GM12878 (cell line): ENCODE measurements at regions of chr10 and their contacts with region 1.

Region 1: GRCh38 chr10:34156781-34157425 is 658.2 kb downstream of the PARD3 start:
- DNase-seq: no peak
- ATAC-seq: no peak
- H3K4me3 ChIP-seq: no peak overlapping the region
- H3K27ac ChIP-seq: no peak overlapping the region
- H3K4me1 ChIP-seq: no peaks in the 10 kb centered on the region
- H3K27me3 ChIP-seq: no peaks in the 10 kb centered on the region
- CTCF ChIP-seq: no peak
- EP300 ChIP-seq: no peak
- POLR2A ChIP-seq: no peak
- RAD21 ChIP-seq: no peak

Region 2: DNA sequence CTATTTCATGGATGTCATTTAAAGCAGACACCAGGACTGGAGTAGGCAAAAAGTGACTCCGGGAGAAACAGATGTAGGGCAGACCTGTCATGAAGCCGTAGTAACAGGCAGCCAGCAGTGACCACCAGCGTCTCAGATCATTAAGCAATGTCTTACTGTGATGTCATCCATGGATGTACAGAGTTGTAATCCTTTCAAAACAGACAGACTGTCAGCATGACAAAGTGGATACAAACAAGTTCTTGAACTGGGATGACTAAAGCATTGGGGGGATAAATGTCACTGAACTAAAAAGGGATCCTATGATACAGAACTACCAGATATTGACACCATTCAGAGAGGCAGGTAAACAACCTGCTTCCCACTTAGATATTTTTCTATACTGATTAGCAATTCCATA is 17.3 kb before region 1 on chr10:
- CTCF ChIA-PET with region 1: no interaction called
- POLR2A ChIA-PET with region 1: no interaction called
- RAD21 ChIA-PET with region 1: interaction called, 14 read pairs
- SMC1A ChIA-PET with region 1: interaction called, 14 read pairs
- in situ Hi-C with region 1: no loop called
- intact Hi-C with region 1: no loop called
- DNase-seq: no peak
- ATAC-seq: peak; percentile 34
- H3K4me3 ChIP-seq: no peak overlapping the region
- H3K27ac ChIP-seq: no peak overlapping the region
- H3K4me1 ChIP-seq: no peaks in the 10 kb centered on the region
- H3K27me3 ChIP-seq: no peaks in the 10 kb centered on the region
- CTCF ChIP-seq: no peak
- EP300 ChIP-seq: no peak
- POLR2A ChIP-seq: no peak
- RAD21 ChIP-seq: no peak

Region 3: GRCh38 chr10:34200355-34200901 is 43.5 kb after region 1 on chr10:
- CTCF ChIA-PET with region 1: no interaction called
- POLR2A ChIA-PET with region 1: no interaction called
- RAD21 ChIA-PET with region 1: no interaction called
- SMC1A ChIA-PET with region 1: no interaction called
- in situ Hi-C with region 1: no loop called
- intact Hi-C with region 1: loop called (anchors 5 kb)
- DNase-seq: no peak
- ATAC-seq: peak; percentile 44; the same call in 2 of the 3 replicates
- H3K4me3 ChIP-seq: no peak overlapping the region
- H3K27ac ChIP-seq: no peak overlapping the region
- H3K4me1 ChIP-seq: no peaks in the 10 kb centered on the region
- H3K27me3 ChIP-seq: no peaks in the 10 kb centered on the region
- CTCF ChIP-seq: no peak
- EP300 ChIP-seq: no peak
- POLR2A ChIP-seq: no peak
- RAD21 ChIP-seq: no peak

Region 4: DNA sequence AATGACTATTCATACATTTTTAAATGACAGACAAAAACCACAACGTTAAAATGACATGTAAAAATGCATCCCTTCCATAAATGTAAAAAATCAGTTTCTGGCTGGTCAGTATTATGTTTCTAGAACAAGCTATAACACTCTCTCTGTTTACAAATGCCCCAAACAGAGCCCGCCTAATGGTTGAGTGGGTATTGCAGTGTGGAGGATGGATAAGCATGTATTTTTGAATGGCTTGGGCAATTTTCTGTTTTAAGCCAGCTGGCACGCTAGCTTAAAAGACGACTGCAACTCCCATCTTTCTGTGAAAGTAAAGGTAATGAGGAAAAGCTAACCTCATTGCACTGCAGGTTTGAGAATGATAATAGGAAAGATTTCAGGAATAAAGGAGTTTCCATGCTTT is 227.5 kb after region 1 on chr10:
- CTCF ChIA-PET with region 1: no interaction called
- POLR2A ChIA-PET with region 1: no interaction called
- RAD21 ChIA-PET with region 1: no interaction called
- SMC1A ChIA-PET with region 1: no interaction called
- in situ Hi-C with region 1: no loop called
- intact Hi-C with region 1: loop called (anchors 10 kb)
- DNase-seq: no peak
- ATAC-seq: no peak
- H3K4me3 ChIP-seq: no peak overlapping the region
- H3K27ac ChIP-seq: no peak overlapping the region
- H3K4me1 ChIP-seq: no peaks in the 10 kb centered on the region
- H3K27me3 ChIP-seq: no peaks in the 10 kb centered on the region
- CTCF ChIP-seq: no peak
- EP300 ChIP-seq: no peak
- POLR2A ChIP-seq: no peak
- RAD21 ChIP-seq: no peak